Panc1 (cell line): ENCODE measurements at regions of chr5 and their contacts with region 1.

Region 1: DNA sequence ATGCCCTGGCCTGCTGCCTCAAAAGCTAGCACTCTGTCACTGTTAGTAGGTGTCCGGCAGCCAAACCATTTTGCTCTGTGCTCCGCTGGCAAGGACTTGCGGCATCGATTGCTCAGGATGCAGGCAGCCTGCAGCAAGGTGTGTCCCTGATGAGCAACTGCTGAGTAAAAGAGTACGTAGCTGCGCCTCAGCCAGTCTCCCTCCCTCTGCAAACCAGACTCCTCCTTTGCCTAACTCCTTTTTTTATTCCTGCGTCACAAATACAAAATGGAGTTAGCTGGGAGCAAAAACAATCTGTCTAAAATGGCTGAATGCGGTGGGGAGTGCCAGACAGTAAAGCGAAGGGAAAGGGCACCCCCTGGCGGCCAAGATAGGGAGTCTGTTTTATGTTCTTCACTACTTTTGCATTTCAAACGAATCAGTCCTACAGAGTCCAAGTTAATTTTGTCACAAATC is 61.1 kb downstream of the DIAPH1 start:
- DNase-seq: peak; percentile 82
- ATAC-seq: peak; percentile 92
- H3K4me3 ChIP-seq: peak overlapping the region; percentile 26 to 54
- H3K27ac ChIP-seq: peak overlapping the region; percentile 84
- H3K4me1 ChIP-seq: peaks cover 17% of the 10 kb centered on the region
- H3K27me3 ChIP-seq: no peaks in the 10 kb centered on the region
- CTCF ChIP-seq: peak; percentile 92

Region 2: GRCh38 chr5:141208478-141208877 is 349.2 kb before region 1 on chr5 and contains the start of gene PCDHB12:
- CTCF ChIA-PET with region 1: interaction called, 3 read pairs
- POLR2A ChIA-PET with region 1: no interaction called
- in situ Hi-C with region 1: no loop called
- intact Hi-C with region 1: loop called (anchors 5 kb)
- DNase-seq: no peak
- ATAC-seq: no peak
- H3K4me3 ChIP-seq: no peak within 1 kb of the TSS; a peak in 1 of 4 replicates
- H3K27ac ChIP-seq: no peak within 1 kb of the TSS
- H3K4me1 ChIP-seq: no peaks in the 10 kb centered on the region
- H3K27me3 ChIP-seq: peaks cover 9% of the 10 kb centered on the region
- CTCF ChIP-seq: peak; percentile 67
- total RNA-seq, gene PCDHB12: 0.44 TPM

Region 3: GRCh38 chr5:141534492-141535211 is 23.1 kb before region 1 on chr5:
- CTCF ChIA-PET with region 1: no interaction called
- POLR2A ChIA-PET with region 1: interaction called, 15 read pairs
- in situ Hi-C with region 1: no loop called
- intact Hi-C with region 1: no loop called
- DNase-seq: no peak
- ATAC-seq: no peak
- H3K4me3 ChIP-seq: no peak overlapping the region
- H3K27ac ChIP-seq: no peak overlapping the region
- H3K4me1 ChIP-seq: no peaks in the 10 kb centered on the region
- H3K27me3 ChIP-seq: no peaks in the 10 kb centered on the region
- CTCF ChIP-seq: no peak